ENCODE measurements at regions of chr14 and their contacts with region 1.

Region 1: DNA sequence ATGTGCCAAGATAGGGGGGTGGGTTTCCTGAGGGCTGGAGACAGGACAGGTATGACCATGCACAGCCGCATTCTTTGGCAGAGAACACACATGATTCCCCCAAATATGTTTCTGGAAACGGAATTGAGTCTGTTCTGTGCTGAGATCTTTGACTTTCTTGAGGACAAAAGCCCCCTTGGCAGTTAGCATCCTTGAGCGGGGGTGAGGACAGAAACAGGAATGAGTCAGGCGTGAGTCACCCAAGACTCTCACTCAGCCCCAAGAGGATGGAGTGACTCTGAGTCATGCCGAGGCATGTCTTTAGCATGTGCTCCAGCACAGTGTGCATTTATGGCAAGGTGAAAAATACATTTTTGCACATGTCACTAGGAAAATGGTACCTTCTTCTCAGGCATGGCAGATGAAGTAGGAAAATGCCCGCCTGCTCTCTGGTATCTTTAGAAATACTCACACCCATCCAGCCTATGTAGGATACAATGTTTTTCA is 52.1 kb downstream of the DAD1 start:
- DNase-seq: peak in 8 of 9 experiments; percentile 65 to 93 (median 82)
- ATAC-seq: peak; percentile 86
- H3K4me3 ChIP-seq: peak overlapping the region; percentile 38
- H3K4me3 Mint-ChIP-seq: peak overlapping the region; percentile 76
- H3K27ac ChIP-seq: peak overlapping the region; percentile 50 to 83
- H3K27ac Mint-ChIP-seq: peak overlapping the region; percentile 93
- H3K4me1 ChIP-seq: peaks cover 98% of the 10 kb centered on the region
- H3K4me1 Mint-ChIP-seq: peaks cover 96% of the 10 kb centered on the region
- H3K27me3 ChIP-seq: no peaks in the 10 kb centered on the region
- H3K27me3 Mint-ChIP-seq: no peaks in the 10 kb centered on the region
- CTCF ChIP-seq: no peak

Region 2: GRCh38 chr14:21723431-21724045 is 813.4 kb before region 1 on chr14:
- CTCF ChIA-PET with region 1: no interaction called
- POLR2A ChIA-PET with region 1: interaction called, 3 read pairs
- intact Hi-C with region 1: loop called in 1 of 2 experiments (anchors 5 kb)
- DNase-seq: peak in 6 of 9 experiments; percentile 9 to 75 (median 50)
- ATAC-seq: peak; percentile 80
- H3K4me3 ChIP-seq: peak overlapping the region; percentile 24 to 42
- H3K4me3 Mint-ChIP-seq: peak overlapping the region; percentile 80
- H3K27ac ChIP-seq: peak overlapping the region in 1 of 2 experiments; percentile 8
- H3K27ac Mint-ChIP-seq: peak overlapping the region; percentile 76
- H3K4me1 ChIP-seq: no peaks in the 10 kb centered on the region
- H3K4me1 Mint-ChIP-seq: peaks cover 3% of the 10 kb centered on the region
- H3K27me3 ChIP-seq: peaks cover 0 to 2% of the 10 kb centered on the region in 2 experiments
- H3K27me3 Mint-ChIP-seq: peaks cover 37% of the 10 kb centered on the region
- CTCF ChIP-seq: peak; percentile 35

Region 3: GRCh38 chr14:21807975-21808374 is 728.9 kb before region 1 on chr14:
- CTCF ChIA-PET with region 1: no interaction called
- POLR2A ChIA-PET with region 1: no interaction called
- intact Hi-C with region 1: no loop called
- DNase-seq: no peak
- ATAC-seq: no peak
- H3K4me3 ChIP-seq: no peak overlapping the region
- H3K4me3 Mint-ChIP-seq: no peak overlapping the region
- H3K27ac ChIP-seq: no peak overlapping the region
- H3K27ac Mint-ChIP-seq: no peak overlapping the region
- H3K4me1 ChIP-seq: no peaks in the 10 kb centered on the region
- H3K4me1 Mint-ChIP-seq: no peaks in the 10 kb centered on the region
- H3K27me3 ChIP-seq: no peaks in the 10 kb centered on the region
- H3K27me3 Mint-ChIP-seq: peaks cover 32% of the 10 kb centered on the region
- CTCF ChIP-seq: no peak

Region 4: GRCh38 chr14:22002860-22003309 is 534.0 kb before region 1 on chr14:
- CTCF ChIA-PET with region 1: no interaction called
- POLR2A ChIA-PET with region 1: no interaction called
- intact Hi-C with region 1: loop called in 1 of 2 experiments (anchors 1 kb)
- DNase-seq: peak; percentile 39 to 84 (median 70)
- ATAC-seq: peak; percentile 76
- H3K4me3 ChIP-seq: peak overlapping the region; percentile 17 to 28
- H3K4me3 Mint-ChIP-seq: peak overlapping the region; percentile 67
- H3K27ac ChIP-seq: peak overlapping the region; percentile 50 to 67
- H3K27ac Mint-ChIP-seq: peak overlapping the region; percentile 93
- H3K4me1 ChIP-seq: peaks cover 20% of the 10 kb centered on the region
- H3K4me1 Mint-ChIP-seq: peaks cover 28% of the 10 kb centered on the region
- H3K27me3 ChIP-seq: no peaks in the 10 kb centered on the region
- H3K27me3 Mint-ChIP-seq: no peaks in the 10 kb centered on the region
- CTCF ChIP-seq: peak; percentile 32

Region 5: GRCh38 chr14:22519877-22520685 is 16.8 kb before region 1 on chr14:
- CTCF ChIA-PET with region 1: interaction called, 47 read pairs
- POLR2A ChIA-PET with region 1: interaction called, 274 read pairs
- intact Hi-C with region 1: loop called in 1 of 2 experiments (anchors 1 kb)
- DNase-seq: peak in 2 of 9 experiments; percentile 37 to 57
- ATAC-seq: peak; percentile 21
- H3K4me3 ChIP-seq: peak overlapping the region; percentile 47 to 61
- H3K4me3 Mint-ChIP-seq: peak overlapping the region; percentile 86
- H3K27ac ChIP-seq: peak overlapping the region; percentile 58 to 86
- H3K27ac Mint-ChIP-seq: peak overlapping the region; percentile 99
- H3K4me1 ChIP-seq: peaks cover 94% of the 10 kb centered on the region
- H3K4me1 Mint-ChIP-seq: peaks cover 93% of the 10 kb centered on the region
- H3K27me3 ChIP-seq: no peaks in the 10 kb centered on the region
- H3K27me3 Mint-ChIP-seq: no peaks in the 10 kb centered on the region
- CTCF ChIP-seq: no peak

Region 6: GRCh38 chr14:22549981-22550673 is 13.2 kb after region 1 on chr14:
- CTCF ChIA-PET with region 1: interaction called, 225 read pairs
- POLR2A ChIA-PET with region 1: interaction called, 348 read pairs
- intact Hi-C with region 1: loop called (anchors 1 kb)
- DNase-seq: peak in 7 of 9 experiments; percentile 53 to 86 (median 78)
- ATAC-seq: peak; percentile 63
- H3K4me3 ChIP-seq: peak overlapping the region; percentile 2 to 14
- H3K4me3 Mint-ChIP-seq: peak overlapping the region; percentile 79
- H3K27ac ChIP-seq: peak overlapping the region; percentile 55 to 97
- H3K27ac Mint-ChIP-seq: peak overlapping the region; percentile 93
- H3K4me1 ChIP-seq: peaks cover 96% of the 10 kb centered on the region
- H3K4me1 Mint-ChIP-seq: peaks cover 94% of the 10 kb centered on the region
- H3K27me3 ChIP-seq: no peaks in the 10 kb centered on the region
- H3K27me3 Mint-ChIP-seq: no peaks in the 10 kb centered on the region
- CTCF ChIP-seq: no peak

Measured in CD8-positive, alpha-beta T cell (primary cell).